Activated naive CD4-positive, alpha-beta T cell treated with anti-CD3 and anti-CD28 coated beads for 36 hours (primary cell): ENCODE measurements at regions of chr10 and their contacts with region 1.

Region 1: GRCh38 chr10:130333185-130333584 is 197.0 kb downstream of the GLRX3 start:
- DNase-seq: no peak
- H3K4me3 Mint-ChIP-seq: no peak overlapping the region
- H3K27ac Mint-ChIP-seq: no peak overlapping the region
- H3K4me1 Mint-ChIP-seq: no peaks in the 10 kb centered on the region
- H3K27me3 Mint-ChIP-seq: no peaks in the 10 kb centered on the region

Region 2: DNA sequence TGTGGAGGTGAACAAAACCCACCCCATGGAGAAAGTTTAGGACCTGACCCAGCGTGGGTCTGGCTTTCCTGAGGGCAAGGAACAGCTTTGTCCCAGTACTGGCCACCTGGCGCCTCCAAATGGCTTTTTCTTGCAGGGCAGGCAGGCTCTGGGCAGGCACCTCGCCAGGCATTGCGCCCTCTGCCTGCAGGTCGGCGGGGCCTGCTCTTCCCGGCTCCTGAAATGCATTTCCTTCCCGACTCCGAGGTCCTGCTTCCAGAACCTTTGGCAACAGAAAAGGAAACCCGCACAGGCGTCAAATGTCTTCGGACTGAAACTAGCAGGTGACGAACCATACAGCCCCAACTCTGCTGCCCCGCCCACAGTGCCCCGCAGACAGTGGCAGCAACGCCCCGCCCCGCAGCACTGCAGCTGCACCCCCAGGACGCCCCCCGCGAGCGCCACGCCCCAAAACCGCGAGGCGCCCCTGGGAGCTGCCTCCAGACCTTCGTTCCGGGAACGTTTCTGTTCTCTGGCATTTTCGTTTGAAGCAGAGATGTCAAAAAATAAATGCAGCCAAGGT is 288.0 kb before region 1 on chr10:
- CTCF ChIA-PET with region 1: no interaction called
- intact Hi-C with region 1: no loop called
- DNase-seq: no peak
- H3K4me3 Mint-ChIP-seq: no peak overlapping the region
- H3K27ac Mint-ChIP-seq: no peak overlapping the region
- H3K4me1 Mint-ChIP-seq: no peaks in the 10 kb centered on the region
- H3K27me3 Mint-ChIP-seq: peaks cover 11% of the 10 kb centered on the region

Region 3: GRCh38 chr10:130190055-130190736 is 143.0 kb before region 1 on chr10:
- CTCF ChIA-PET with region 1: no interaction called
- intact Hi-C with region 1: loop called (anchors 1 kb)
- DNase-seq: peak; percentile 88
- H3K4me3 Mint-ChIP-seq: peak overlapping the region; percentile 15
- H3K27ac Mint-ChIP-seq: no peak overlapping the region
- H3K4me1 Mint-ChIP-seq: peaks cover 3% of the 10 kb centered on the region
- H3K27me3 Mint-ChIP-seq: peaks cover 6% of the 10 kb centered on the region

Region 4: DNA sequence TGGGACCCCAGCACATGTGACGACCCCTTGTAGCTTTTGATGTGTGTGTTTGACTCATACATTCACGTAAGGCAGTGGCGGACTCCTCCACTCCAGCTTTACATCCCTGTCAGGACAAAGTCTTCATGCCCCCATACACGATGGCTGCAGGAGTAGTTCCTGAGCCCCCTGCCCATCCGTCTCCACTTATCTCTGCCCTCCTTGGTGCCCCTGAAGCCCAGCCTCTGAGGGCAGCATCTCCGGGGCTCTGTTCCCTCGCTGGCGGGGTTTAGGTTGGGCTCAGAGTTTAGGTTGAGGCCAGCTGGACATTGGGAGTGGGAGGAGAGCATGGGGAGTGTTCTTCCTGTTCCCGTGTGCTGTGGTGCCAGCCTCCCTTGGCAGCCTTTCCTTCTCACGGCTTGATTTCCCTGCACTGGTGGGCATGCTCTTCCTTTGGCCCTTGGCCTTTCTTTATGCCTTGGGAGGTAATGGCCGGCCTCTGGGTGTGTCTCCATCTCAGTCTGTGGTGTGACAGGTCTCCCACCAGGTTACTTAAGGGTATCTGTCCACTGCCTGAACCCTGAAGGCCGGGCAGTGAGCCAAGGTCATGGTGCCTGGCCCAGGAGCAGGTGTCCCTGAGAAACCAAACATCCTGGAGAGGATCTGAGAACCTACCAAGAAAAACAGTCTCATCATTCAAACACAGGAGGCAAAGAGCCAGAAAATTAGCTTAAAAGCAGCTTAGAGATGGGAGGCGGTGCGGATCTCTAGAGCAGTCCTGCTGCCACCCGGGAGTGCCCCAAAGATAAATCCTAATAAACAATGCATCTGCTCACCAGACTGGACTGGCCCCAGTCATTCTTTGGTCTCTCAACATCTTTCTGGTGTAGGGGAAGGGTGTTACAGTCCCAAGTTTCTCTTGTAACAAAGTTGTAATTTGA is 111.5 kb before region 1 on chr10:
- CTCF ChIA-PET with region 1: no interaction called
- intact Hi-C with region 1: no loop called
- DNase-seq: no peak
- H3K4me3 Mint-ChIP-seq: no peak overlapping the region
- H3K27ac Mint-ChIP-seq: no peak overlapping the region
- H3K4me1 Mint-ChIP-seq: no peaks in the 10 kb centered on the region
- H3K27me3 Mint-ChIP-seq: no peaks in the 10 kb centered on the region